HEK293T (cell line): ENCODE measurements at regions of chr6 and their contacts with region 1.

Region 1: DNA sequence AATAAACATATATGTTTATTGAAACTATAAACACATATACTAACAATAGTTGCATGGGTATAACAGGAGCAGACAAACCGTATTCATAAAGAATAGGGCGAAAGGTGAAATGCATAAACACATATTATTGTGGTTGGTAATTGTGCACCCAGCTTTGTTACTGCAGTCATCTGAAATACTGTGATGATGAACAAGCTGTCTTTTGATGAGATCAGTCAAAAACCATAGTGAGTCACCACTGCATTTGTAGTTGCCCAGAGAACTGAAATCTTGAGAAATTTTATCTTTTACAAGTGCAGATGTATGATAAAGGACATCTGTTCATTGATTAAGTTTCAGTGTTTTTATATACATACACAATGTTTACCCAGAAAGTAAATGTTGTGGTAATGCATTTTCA is 133.7 kb downstream of the MYO6 start:
- DNase-seq: no peak

Region 2: GRCh38 chr6:75802366-75802765 is 80.4 kb before region 1 on chr6:
- CTCF ChIA-PET with region 1: no interaction called
- POLR2A ChIA-PET with region 1: no interaction called
- DNase-seq: no peak

Region 3: GRCh38 chr6:75893058-75893775 is 10.5 kb after region 1 on chr6:
- CTCF ChIA-PET with region 1: interaction called, 30 read pairs
- POLR2A ChIA-PET with region 1: no interaction called
- DNase-seq: peak; percentile 42